Activated T-helper 1 cell treated with anti-CD3 and anti-CD28 coated beads, Interleukin-12 subunit alpha, Interleukin-12 subunit beta, Interleukin-2, Interleukin-4 antibody, amounts not matched to agents 30 ng/mL and 10 ng/mL and 1 ng/mL, durations not matched to agents 14 hours and 24 hours and 36 hours (primary cell): ENCODE measurements at regions of chr11 and their contacts with region 1.

Region 1: GRCh38 chr11:110349138-110349996 is 53.0 kb upstream of the RDX start:
- DNase-seq: peak; percentile 74
- H3K4me3 Mint-ChIP-seq: peak overlapping the region; percentile 62
- H3K27ac Mint-ChIP-seq: peak overlapping the region; percentile 98
- H3K4me1 Mint-ChIP-seq: peaks cover 83% of the 10 kb centered on the region
- H3K27me3 Mint-ChIP-seq: no peaks in the 10 kb centered on the region

Region 2: GRCh38 chr11:108733479-108734116 is 1615.8 kb before region 1 on chr11:
- intact Hi-C with region 1: loop called (anchors 1 kb)
- DNase-seq: peak; percentile 25
- H3K4me3 Mint-ChIP-seq: peak overlapping the region; percentile 55
- H3K27ac Mint-ChIP-seq: peak overlapping the region; percentile 88
- H3K4me1 Mint-ChIP-seq: peaks cover 44% of the 10 kb centered on the region
- H3K27me3 Mint-ChIP-seq: no peaks in the 10 kb centered on the region

Region 3: DNA sequence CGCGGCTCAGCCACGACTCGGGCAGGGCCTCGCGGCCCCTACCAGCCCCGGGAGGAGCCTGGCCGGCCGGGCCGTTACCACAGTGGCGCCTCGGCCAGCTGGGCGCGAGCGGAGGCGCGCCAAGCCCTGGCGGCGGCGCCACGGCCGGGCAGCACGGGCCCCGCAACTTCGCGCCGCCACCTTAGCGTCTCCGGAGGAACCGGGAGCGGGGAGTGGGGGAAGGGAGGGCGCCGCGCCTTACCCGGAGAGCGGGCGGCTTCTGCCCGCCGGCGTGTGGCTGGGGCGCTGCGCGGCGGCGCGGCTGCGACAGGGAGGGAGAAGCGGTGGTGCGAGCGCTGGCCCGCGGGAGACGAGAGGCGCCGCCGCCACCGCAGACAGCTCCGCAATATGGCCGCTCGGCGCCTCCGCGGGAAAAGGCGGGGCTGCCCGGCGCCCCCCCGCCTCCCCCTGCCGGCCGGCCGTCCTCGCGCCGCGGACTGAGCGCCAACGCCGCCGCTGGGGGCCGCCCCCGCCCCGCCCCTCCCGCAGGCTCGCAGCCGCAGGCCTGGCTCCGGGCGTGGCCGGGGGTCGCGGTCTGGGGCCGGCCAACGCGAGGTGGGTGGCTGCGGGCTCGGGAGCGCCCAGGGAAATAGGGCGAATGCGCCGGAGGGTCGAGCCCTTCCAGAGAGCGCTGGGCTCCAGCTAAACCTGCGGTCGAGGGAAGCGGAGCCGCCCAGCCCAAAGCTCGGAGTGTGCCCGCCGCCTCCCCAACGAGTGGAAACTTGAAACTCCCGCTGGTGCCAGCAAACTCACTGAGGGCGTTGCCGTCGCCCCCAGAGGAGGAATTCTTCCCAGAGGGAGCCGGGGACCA is 52.9 kb before region 1 on chr11 and contains the start of gene RDX:
- intact Hi-C with region 1: loop called (anchors 1 kb)
- DNase-seq: peak; percentile 63
- H3K4me3 Mint-ChIP-seq: peak within 1 kb of the TSS; percentile 86
- H3K27ac Mint-ChIP-seq: peak within 1 kb of the TSS; percentile 65
- H3K4me1 Mint-ChIP-seq: peaks cover 54% of the 10 kb centered on the region
- H3K27me3 Mint-ChIP-seq: no peaks in the 10 kb centered on the region
- total RNA-seq, gene RDX: 94.6 and 98.9 TPM in 2 replicates

Region 4: DNA sequence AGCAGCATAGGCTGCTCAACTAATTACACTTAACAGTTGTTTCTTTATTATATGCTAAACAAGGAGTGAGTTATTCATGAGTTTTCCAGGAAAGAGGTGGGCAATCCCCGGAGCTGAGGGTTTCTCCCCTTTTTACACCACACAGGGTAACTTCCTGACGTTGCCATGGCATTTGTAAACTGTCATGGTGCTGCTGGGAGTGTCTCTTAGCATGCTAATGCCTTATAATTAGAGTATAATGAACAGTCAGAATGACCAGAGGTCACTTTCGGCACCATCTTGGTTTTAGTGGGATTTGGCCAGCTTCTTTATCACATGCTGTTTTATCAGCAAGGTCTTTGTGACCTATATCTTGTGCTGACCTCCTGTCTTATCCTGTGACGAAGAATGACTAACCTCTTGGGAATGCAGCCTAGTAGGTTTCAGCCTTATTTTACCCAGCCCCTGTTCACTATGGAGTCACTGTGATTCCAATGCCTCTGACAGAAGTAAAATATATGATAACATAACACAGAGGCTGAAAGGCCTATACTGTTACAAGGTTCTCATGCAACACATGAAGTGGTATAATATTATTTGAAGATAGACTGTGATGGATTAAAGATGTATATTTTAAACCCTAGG is 11.7 kb before region 1 on chr11:
- intact Hi-C with region 1: loop called (anchors 1 kb)
- DNase-seq: peak; percentile 55
- H3K4me3 Mint-ChIP-seq: no peak overlapping the region
- H3K27ac Mint-ChIP-seq: peak overlapping the region; percentile 76
- H3K4me1 Mint-ChIP-seq: peaks cover 43% of the 10 kb centered on the region
- H3K27me3 Mint-ChIP-seq: no peaks in the 10 kb centered on the region

Region 5: DNA sequence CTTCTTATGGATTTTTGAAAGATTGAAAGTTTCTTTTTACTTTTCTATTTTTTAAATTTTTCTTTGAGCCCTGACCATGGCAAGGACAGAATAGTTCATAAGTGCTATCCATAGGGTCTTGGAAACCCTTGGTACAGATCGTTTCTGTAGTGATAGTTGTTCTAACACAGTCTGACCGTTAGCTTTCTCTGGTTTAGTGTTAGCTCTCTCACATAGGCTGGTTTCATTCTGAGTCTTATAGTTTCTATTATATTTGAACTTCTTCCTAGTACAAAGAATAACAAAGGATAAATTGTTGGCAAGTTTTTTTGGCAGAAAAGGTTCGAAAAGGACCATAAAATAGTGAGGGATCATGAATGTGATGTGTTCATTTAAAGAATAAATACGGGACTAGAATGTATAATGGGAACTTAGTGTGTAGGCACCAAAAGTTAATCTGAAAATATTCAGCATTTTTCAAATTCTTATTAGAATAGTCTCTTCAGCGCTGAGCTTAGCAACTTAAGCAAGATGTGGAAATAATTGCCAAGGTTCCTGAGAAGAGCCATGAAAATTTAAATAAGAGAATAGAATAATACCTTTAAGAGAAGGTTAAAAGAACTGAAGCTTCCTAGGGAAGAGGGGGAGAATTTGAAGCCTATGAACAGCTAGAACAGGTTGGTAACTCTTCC is 104.5 kb after region 1 on chr11:
- intact Hi-C with region 1: loop called (anchors 1 kb)
- DNase-seq: no peak
- H3K4me3 Mint-ChIP-seq: peak overlapping the region; percentile 17
- H3K27ac Mint-ChIP-seq: peak overlapping the region; percentile 51
- H3K4me1 Mint-ChIP-seq: peaks cover 52% of the 10 kb centered on the region
- H3K27me3 Mint-ChIP-seq: no peaks in the 10 kb centered on the region

Region 6: GRCh38 chr11:111938687-111939160 is 1589.4 kb after region 1 on chr11:
- intact Hi-C with region 1: loop called (anchors 5 kb)
- DNase-seq: peak; percentile 22
- H3K4me3 Mint-ChIP-seq: peak overlapping the region; percentile 88
- H3K27ac Mint-ChIP-seq: peak overlapping the region; percentile 92
- H3K4me1 Mint-ChIP-seq: peaks cover 58% of the 10 kb centered on the region
- H3K27me3 Mint-ChIP-seq: no peaks in the 10 kb centered on the region